CD4-positive, alpha-beta T cell (primary cell): ENCODE measurements at regions of chr1 and their contacts with region 1.

Region 1: GRCh38 chr1:211813590-211813989 is 17.0 kb downstream of the LPGAT1 start:
- DNase-seq: no peak
- ATAC-seq: no peak
- H3K4me3 ChIP-seq: no peak overlapping the region
- H3K4me3 Mint-ChIP-seq: no peak overlapping the region
- H3K27ac ChIP-seq: no peak overlapping the region
- H3K27ac Mint-ChIP-seq: no peak overlapping the region
- H3K4me1 ChIP-seq: no peaks in the 10 kb centered on the region
- H3K4me1 Mint-ChIP-seq: no peaks in the 10 kb centered on the region
- H3K27me3 ChIP-seq: no peaks in the 10 kb centered on the region
- H3K27me3 Mint-ChIP-seq: no peaks in the 10 kb centered on the region
- CTCF ChIP-seq: no peak

Region 2: DNA sequence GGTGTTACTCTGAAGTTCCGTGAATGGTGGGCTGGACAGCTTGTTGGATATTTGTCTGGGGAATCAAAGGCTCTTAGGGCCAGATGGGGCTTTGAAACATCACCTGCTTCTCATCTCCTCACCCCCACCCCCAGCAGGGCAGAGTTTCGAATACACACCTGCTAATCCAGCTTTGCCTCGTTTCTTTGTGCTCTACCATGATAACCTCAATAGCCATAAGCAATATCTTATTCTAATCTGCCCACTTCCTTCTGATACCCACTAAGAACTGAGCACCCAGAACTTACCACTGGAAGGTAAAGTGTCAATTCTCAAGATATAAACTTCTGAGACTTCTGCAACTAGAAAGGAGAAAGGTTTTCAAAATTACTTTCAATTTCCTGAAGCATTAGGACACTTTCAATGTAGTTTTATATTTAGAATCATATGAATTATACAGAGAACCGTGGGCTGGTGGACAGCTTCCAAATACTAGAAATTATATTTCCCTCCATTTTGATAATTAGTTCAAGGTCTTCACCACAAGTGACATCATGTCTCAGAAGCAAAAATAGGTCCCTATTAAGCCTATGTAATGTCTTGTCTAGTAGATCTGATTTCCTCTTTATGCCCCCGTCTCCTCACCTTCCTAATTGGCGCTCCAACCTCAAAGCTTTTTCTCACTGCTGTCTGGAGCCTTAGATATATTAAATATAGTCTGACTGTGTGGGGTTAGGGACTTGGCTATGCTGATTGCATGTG is 73.7 kb before region 1 on chr1:
- CTCF ChIA-PET with region 1: no interaction called
- POLR2A ChIA-PET with region 1: no interaction called
- intact Hi-C with region 1: loop called in 1 of 2 experiments (anchors 5 kb)
- DNase-seq: peak in 3 of 14 experiments; percentile 24 to 42 (median 34)
- ATAC-seq: peak; percentile 77
- H3K4me3 ChIP-seq: peak overlapping the region; percentile 1
- H3K4me3 Mint-ChIP-seq: peak overlapping the region; percentile 67
- H3K27ac ChIP-seq: peak overlapping the region in 1 of 2 donors; percentile 10
- H3K27ac Mint-ChIP-seq: peak overlapping the region; percentile 72
- H3K4me1 ChIP-seq: peaks cover 37% of the 10 kb centered on the region
- H3K4me1 Mint-ChIP-seq: peaks cover 38% of the 10 kb centered on the region
- H3K27me3 ChIP-seq: no peaks in the 10 kb centered on the region
- H3K27me3 Mint-ChIP-seq: no peaks in the 10 kb centered on the region
- CTCF ChIP-seq: no peak

Region 3: GRCh38 chr1:211761400-211761799 is 52.2 kb before region 1 on chr1:
- CTCF ChIA-PET with region 1: no interaction called
- POLR2A ChIA-PET with region 1: no interaction called
- intact Hi-C with region 1: no loop called
- DNase-seq: no peak
- ATAC-seq: no peak
- H3K4me3 ChIP-seq: no peak overlapping the region
- H3K4me3 Mint-ChIP-seq: no peak overlapping the region
- H3K27ac ChIP-seq: no peak overlapping the region
- H3K27ac Mint-ChIP-seq: no peak overlapping the region
- H3K4me1 ChIP-seq: no peaks in the 10 kb centered on the region
- H3K4me1 Mint-ChIP-seq: no peaks in the 10 kb centered on the region
- H3K27me3 ChIP-seq: no peaks in the 10 kb centered on the region
- H3K27me3 Mint-ChIP-seq: no peaks in the 10 kb centered on the region
- CTCF ChIP-seq: no peak

Region 4: DNA sequence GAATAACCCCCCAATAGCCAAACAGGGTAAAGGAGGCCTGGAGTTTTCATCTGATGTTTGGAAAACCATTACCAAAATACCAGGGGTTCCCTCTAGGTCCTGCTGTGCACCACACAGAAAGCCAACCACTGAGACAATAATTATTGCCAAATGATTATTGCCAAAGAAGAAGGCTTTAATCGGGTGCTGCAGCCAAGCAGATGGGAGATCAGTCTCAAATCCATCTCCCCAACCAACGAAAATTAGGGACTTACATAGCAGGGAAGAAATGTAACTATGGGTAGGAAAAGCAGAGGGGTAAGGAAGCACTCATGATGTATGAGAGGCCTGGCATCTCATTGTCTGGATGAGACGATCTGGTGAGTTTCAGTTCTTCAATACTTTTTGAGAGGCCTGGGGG is 45.8 kb after region 1 on chr1:
- CTCF ChIA-PET with region 1: no interaction called
- POLR2A ChIA-PET with region 1: no interaction called
- intact Hi-C with region 1: no loop called
- DNase-seq: no peak
- ATAC-seq: no peak
- H3K4me3 ChIP-seq: no peak overlapping the region
- H3K4me3 Mint-ChIP-seq: no peak overlapping the region
- H3K27ac ChIP-seq: no peak overlapping the region
- H3K27ac Mint-ChIP-seq: no peak overlapping the region
- H3K4me1 ChIP-seq: no peaks in the 10 kb centered on the region
- H3K4me1 Mint-ChIP-seq: no peaks in the 10 kb centered on the region
- H3K27me3 ChIP-seq: no peaks in the 10 kb centered on the region
- H3K27me3 Mint-ChIP-seq: peaks cover 13% of the 10 kb centered on the region
- CTCF ChIP-seq: no peak

Region 5: DNA sequence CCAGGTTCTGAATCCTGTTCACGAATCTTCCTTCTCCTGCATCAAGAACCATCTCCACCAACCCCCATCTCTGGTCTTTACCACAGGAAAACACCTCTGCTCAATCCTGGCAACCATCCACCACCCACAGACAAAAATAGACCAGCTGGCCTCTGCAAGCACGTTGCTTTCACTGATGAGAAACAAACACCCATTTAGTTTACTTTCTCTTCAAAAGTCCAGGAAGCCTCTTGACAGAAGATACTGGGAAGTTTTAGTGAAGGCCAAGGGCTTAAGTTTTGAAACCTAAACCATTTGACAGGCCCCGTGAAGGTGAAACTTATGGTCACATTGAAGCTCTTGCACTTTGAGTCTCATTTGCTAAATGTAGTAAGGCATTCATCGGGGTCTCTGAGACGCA is 349.0 kb after region 1 on chr1:
- CTCF ChIA-PET with region 1: no interaction called
- POLR2A ChIA-PET with region 1: no interaction called
- intact Hi-C with region 1: no loop called
- DNase-seq: peak in 7 of 14 experiments; percentile 7 to 39 (median 35)
- ATAC-seq: no peak
- H3K4me3 ChIP-seq: no peak overlapping the region
- H3K4me3 Mint-ChIP-seq: peak overlapping the region; percentile 2
- H3K27ac ChIP-seq: no peak overlapping the region
- H3K27ac Mint-ChIP-seq: no peak overlapping the region
- H3K4me1 ChIP-seq: peaks cover 35% of the 10 kb centered on the region
- H3K4me1 Mint-ChIP-seq: peaks cover 27% of the 10 kb centered on the region
- H3K27me3 ChIP-seq: no peaks in the 10 kb centered on the region
- H3K27me3 Mint-ChIP-seq: no peaks in the 10 kb centered on the region
- CTCF ChIP-seq: no peak